Common myeloid progenitor, CD34-positive (primary cell): ENCODE measurements at regions of chr20 and their contacts with region 1.

Region 1: DNA sequence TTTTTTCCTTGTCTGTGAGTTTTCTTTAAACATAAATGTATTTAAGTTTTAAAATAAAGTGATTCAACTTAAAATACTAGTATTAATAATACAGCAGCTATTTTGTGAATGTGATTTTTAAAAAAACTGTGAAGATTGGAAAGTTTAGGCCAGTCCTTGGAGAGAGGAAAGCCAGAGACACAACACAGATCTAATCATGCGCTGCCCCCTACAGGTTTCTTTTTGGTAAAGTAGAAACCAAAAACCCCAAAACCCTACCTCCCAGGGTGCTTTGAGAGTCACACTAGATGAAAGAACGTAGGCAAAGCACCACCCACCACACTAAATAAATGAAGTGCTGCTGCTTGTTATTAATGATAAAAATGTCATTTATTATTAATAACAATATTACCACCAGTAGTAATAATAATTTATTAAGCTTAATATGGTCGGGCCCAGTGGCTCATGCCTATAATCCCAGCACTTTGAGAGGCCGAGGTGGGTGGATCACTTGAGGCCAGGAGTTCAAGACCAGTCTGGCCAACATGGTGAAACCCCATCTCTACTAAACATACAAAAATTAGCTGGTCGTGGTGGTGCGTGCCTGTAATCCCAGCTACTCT is 33.7 kb downstream of the SLC9A8 start:
- DNase-seq: peak; percentile 50 to 67 (median 58)
- H3K4me3 ChIP-seq: no peak overlapping the region
- H3K27ac ChIP-seq: no peak overlapping the region
- H3K4me1 ChIP-seq: peaks cover 0 to 1% (median 0%) of the 10 kb centered on the region in 4 experiments
- H3K27me3 ChIP-seq: no peaks in the 10 kb centered on the region

Region 2: DNA sequence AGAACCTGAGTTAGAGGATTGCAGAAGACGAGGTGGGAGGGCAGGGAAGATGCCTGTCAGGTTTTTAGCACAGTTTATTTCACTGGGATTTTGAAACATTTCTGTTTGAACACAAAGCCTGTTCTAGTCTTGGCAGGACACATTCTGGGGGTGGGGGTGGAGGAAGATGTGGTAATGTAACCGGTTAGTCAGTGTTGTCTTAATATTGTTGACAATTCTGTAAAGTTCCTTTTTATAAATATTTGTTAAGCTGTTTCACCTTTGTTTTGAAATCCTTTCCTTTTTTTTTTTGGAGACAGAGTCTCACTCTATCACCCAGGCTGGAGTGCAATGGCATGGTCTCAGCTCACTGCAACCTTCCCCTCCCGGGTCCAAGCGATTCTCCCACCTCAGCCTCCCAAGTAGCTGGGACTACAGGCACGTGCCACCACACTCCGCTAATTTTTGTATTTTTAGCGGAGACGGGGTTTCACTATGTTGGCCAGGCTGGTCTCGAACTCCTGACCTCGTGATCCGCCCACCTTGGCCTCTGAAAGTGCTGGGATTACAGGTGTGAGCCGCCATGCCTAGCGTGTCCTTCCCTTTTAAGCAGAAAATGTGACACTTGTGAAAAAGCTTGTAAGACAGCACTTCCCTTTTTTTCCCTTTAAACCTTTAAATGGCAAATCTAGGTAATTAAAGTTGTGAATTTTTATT is 13.5 kb before region 1 on chr20:
- CTCF ChIA-PET with region 1: interaction called, 12 read pairs
- POLR2A ChIA-PET with region 1: no interaction called
- DNase-seq: no peak
- H3K4me3 ChIP-seq: no peak overlapping the region
- H3K27ac ChIP-seq: no peak overlapping the region
- H3K4me1 ChIP-seq: peaks cover 0 to 4% (median 0%) of the 10 kb centered on the region in 4 experiments
- H3K27me3 ChIP-seq: no peaks in the 10 kb centered on the region

Region 3: GRCh38 chr20:49868538-49868937 is 22.2 kb after region 1 on chr20:
- CTCF ChIA-PET with region 1: no interaction called
- POLR2A ChIA-PET with region 1: no interaction called
- DNase-seq: no peak
- H3K4me3 ChIP-seq: no peak overlapping the region
- H3K27ac ChIP-seq: no peak overlapping the region
- H3K4me1 ChIP-seq: peaks cover 0 to 5% (median 0%) of the 10 kb centered on the region in 4 experiments
- H3K27me3 ChIP-seq: no peaks in the 10 kb centered on the region

Region 4: GRCh38 chr20:49878977-49879376 is 32.7 kb after region 1 on chr20:
- CTCF ChIA-PET with region 1: no interaction called
- POLR2A ChIA-PET with region 1: no interaction called
- DNase-seq: no peak
- H3K4me3 ChIP-seq: no peak overlapping the region
- H3K27ac ChIP-seq: no peak overlapping the region
- H3K4me1 ChIP-seq: no peaks in the 10 kb centered on the region
- H3K27me3 ChIP-seq: no peaks in the 10 kb centered on the region